ENCODE measurements at regions of chr17 and their contacts with region 1.

Region 1: DNA sequence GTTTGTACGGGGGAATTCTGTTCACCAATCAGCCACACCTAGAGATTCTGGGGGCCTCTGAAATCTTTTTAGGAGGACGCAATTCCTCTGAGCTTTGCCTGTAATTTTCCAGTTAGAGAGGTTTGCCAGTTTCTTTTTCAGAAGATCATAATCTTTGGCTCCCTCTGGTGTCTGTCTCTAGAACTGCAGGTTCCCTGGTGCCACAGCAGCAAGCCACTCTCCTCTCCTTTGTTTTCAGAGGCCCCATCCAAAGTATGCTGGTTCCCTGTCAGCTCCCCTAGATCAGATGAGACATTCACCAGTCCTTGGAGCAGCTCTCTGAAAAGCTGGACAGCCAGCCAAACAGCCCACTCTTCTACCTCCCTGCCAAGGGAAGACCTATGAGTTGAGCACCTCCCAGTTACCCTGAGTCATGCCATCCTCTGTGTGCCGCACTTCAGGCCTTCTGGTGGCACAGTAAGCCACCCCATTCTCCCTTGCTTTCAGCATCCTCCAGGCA is 36.1 kb downstream of the RNF112 start:
- DNase-seq: peak; percentile 80
- ATAC-seq: peak; percentile 90
- H3K4me3 Mint-ChIP-seq: no peak overlapping the region
- H3K27ac Mint-ChIP-seq: peak overlapping the region; percentile 63
- H3K4me1 Mint-ChIP-seq: peaks cover 25% of the 10 kb centered on the region
- H3K27me3 Mint-ChIP-seq: peaks cover 10% of the 10 kb centered on the region
- CTCF ChIP-seq: peak; percentile 99

Region 2: DNA sequence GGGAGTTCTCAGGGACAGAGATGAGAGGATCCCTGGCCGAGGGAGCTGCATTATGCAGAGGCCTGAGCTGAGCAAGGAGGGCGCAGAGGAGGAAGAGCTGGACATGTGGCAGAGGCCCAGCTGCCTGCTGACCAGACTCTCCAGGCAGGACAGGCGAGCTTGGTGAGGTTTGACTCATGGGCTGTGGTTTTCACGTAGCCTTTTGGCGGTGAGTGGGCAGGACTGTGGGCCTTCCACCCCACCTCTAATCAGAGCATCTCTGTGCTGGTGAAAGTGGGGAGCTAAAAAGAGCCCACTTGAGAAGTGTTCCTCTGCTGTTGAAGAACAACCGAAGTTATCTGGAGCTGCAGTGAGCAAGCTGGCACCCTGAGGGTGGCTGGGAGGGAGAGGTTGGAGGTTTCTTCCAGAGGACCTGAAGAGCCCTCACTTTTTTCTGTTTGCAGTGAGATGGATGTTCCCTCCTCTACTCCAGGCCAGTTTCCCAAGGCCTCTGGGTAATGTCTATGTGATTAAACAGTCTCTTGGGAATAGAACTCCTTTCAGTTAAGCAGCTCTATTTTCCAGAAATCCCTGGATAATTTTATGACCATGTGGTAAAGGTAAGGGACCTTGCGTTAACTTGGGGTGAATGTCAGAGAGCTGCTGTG is 198.1 kb before region 1 on chr17:
- CTCF ChIA-PET with region 1: no interaction called
- POLR2A ChIA-PET with region 1: no interaction called
- DNase-seq: no peak
- ATAC-seq: no peak
- H3K4me3 Mint-ChIP-seq: no peak overlapping the region
- H3K27ac Mint-ChIP-seq: peak overlapping the region; percentile 63; the same call in 1 of the 2 replicates
- H3K4me1 Mint-ChIP-seq: peaks cover 29% of the 10 kb centered on the region
- H3K27me3 Mint-ChIP-seq: no peaks in the 10 kb centered on the region
- CTCF ChIP-seq: no peak

Region 3: GRCh38 chr17:19377602-19378392 is 69.3 kb before region 1 on chr17:
- CTCF ChIA-PET with region 1: interaction called, 37 read pairs
- POLR2A ChIA-PET with region 1: interaction called, 3 read pairs
- DNase-seq: peak; percentile 99
- ATAC-seq: peak; percentile 93
- H3K4me3 Mint-ChIP-seq: peak overlapping the region; percentile 99
- H3K27ac Mint-ChIP-seq: peak overlapping the region; percentile 97
- H3K4me1 Mint-ChIP-seq: peaks cover 16% of the 10 kb centered on the region
- H3K27me3 Mint-ChIP-seq: no peaks in the 10 kb centered on the region
- CTCF ChIP-seq: no peak

Region 4: GRCh38 chr17:19398301-19399181 is 48.6 kb before region 1 on chr17:
- CTCF ChIA-PET with region 1: interaction called, 63 read pairs
- POLR2A ChIA-PET with region 1: no interaction called
- DNase-seq: no peak
- ATAC-seq: no peak
- H3K4me3 Mint-ChIP-seq: no peak overlapping the region
- H3K27ac Mint-ChIP-seq: peak overlapping the region; percentile 51; the same call in 1 of the 2 replicates
- H3K4me1 Mint-ChIP-seq: peaks cover 11% of the 10 kb centered on the region
- H3K27me3 Mint-ChIP-seq: no peaks in the 10 kb centered on the region; the same call in 1 of the 2 replicates
- CTCF ChIP-seq: no peak

Region 5: GRCh38 chr17:19424934-19425868 is 21.9 kb before region 1 on chr17:
- CTCF ChIA-PET with region 1: interaction called, 17 read pairs
- POLR2A ChIA-PET with region 1: no interaction called
- DNase-seq: no peak
- ATAC-seq: no peak
- H3K4me3 Mint-ChIP-seq: no peak overlapping the region
- H3K27ac Mint-ChIP-seq: no peak overlapping the region
- H3K4me1 Mint-ChIP-seq: peaks cover 31% of the 10 kb centered on the region
- H3K27me3 Mint-ChIP-seq: no peaks in the 10 kb centered on the region
- CTCF ChIP-seq: no peak

Region 6: GRCh38 chr17:19460700-19461099 is 13.6 kb after region 1 on chr17:
- CTCF ChIA-PET with region 1: interaction called, 40 read pairs
- POLR2A ChIA-PET with region 1: interaction called, 3 read pairs
- DNase-seq: no peak
- ATAC-seq: peak; percentile 9
- H3K4me3 Mint-ChIP-seq: peak overlapping the region; percentile 21
- H3K27ac Mint-ChIP-seq: peak overlapping the region; percentile 83
- H3K4me1 Mint-ChIP-seq: peaks cover 90% of the 10 kb centered on the region
- H3K27me3 Mint-ChIP-seq: no peaks in the 10 kb centered on the region
- CTCF ChIP-seq: no peak

Region 7: DNA sequence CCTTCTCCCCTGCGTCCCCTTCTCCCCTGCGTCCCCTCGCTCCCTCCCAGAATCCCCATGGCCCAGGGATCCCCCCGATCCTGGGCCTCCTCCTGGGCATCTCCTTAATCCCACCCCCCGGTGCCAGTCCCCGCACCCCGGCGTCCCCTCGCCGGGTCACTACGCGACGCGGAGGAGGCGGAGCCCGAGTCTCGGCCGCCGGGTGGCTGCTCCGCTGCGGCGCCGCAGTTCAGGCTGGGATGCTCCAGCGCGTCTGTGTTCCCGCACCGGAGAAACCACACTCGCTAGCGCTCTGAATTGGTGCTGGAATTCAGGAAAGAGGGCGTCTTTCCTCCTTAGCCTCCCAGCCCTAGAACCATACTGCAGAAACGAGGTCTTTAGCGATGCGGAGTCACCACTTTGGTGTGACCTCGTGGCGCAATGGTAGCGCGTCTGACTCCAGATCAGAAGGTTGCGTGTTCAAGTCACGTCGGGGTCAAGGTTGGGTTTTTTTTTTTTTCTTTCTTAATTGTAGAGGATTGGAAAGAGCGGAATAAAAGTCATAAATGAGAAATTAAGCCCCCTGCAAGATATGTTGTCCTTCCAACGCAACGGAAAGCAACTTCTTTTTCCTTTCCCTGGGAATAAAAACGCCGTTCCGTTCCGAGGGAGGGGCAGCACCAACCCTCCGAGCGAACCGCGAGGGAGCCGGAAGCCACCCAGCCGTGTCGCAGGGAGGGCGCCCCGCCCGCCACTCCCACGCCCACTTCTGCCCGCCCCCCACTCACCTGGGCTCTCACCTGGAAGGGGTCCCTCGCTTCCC is 60.8 kb after region 1 on chr17:
- CTCF ChIA-PET with region 1: no interaction called
- POLR2A ChIA-PET with region 1: no interaction called
- DNase-seq: peak; percentile 92
- ATAC-seq: peak; percentile 89
- H3K4me3 Mint-ChIP-seq: peak overlapping the region; percentile 79
- H3K27ac Mint-ChIP-seq: peak overlapping the region; percentile 97
- H3K4me1 Mint-ChIP-seq: peaks cover 24% of the 10 kb centered on the region
- H3K27me3 Mint-ChIP-seq: peaks cover 2% of the 10 kb centered on the region; the same call in 1 of the 2 replicates
- CTCF ChIP-seq: no peak